Ovary (tissue), 10 donors: ENCODE measurements at regions of chr9 and their contacts with region 1.

Region 1: GRCh38 chr9:130675396-130675795 is 11.0 kb downstream of the PRDM12 start:
- DNase-seq: no peak
- H3K4me3 ChIP-seq: no peak overlapping the region
- H3K27ac ChIP-seq: no peak overlapping the region
- H3K4me1 ChIP-seq: no peaks in the 10 kb centered on the region
- H3K27me3 ChIP-seq: no peaks in the 10 kb centered on the region
- CTCF ChIP-seq: no peak
- EP300 ChIP-seq: no peak
- POLR2A ChIP-seq: no peak

Region 2: DNA sequence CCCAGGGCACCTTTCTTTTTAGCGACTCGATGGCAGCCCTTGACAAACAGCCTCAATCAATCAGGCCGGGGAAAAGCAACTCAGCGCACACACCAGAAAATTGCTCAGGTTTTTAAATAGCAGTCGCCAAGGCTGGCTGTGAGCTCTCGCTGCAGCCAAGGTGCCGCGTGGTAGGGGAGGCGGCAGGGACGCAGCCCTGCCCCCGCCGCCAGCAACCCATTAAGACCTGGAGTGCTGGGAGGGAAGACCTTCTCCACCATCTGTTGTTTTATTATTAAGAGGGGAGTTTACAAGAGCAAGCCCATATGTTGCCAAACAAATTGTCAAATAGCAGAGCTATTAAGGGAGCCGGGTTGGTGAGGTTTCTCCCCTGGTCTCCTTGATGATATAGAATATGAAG is 208.0 kb before region 1 on chr9:
- intact Hi-C with region 1: loop called in 3 of 4 experiments (anchors 5 kb)
- DNase-seq: no peak
- H3K4me3 ChIP-seq: no peak overlapping the region
- H3K27ac ChIP-seq: no peak overlapping the region
- H3K4me1 ChIP-seq: no peaks in the 10 kb centered on the region
- H3K27me3 ChIP-seq: no peaks in the 10 kb centered on the region
- CTCF ChIP-seq: no peak
- EP300 ChIP-seq: no peak
- POLR2A ChIP-seq: no peak

Region 3: DNA sequence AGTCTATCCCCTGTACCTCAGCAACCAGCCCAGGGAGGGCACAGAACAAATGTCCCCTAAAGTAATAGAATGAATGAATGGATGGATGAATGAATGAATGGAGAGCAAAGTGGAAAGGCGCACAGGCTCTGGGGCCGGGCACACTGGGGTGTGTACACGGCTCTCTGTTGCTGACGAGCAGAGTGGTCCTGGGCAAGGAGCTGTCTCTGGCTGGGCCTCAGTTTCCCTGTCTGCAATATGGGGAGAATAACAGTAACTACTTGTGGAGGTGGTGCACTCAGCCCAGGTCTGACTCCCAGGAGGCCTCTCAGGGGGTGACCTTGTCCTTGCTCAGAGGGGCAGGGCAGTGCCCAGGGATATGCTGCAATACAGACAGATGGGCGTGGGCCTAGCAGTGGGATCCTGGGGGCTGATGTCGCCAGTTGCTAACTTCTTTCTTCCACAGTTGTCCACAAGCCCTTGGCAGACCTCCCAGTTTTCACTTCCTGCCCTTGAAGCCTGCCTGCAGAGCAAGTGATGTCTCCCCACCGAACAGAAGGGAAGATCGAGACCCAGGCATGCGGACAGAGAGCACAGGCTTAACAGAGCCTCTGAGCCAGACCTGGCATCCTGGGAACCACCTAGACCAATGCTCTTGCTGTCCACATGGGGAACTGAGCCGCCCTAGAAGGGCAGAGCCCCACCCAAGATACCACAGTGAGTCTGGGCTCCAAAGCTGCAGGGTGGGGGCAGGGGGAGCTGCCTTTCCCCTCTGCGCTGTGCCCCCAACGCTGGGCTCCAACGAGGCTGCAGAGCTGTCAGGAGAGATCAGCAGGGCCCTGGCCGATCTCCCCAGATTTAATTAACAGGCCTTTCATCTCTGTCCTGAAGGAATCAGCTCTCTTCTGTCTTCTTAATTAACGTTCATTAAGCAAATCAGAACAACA is 320.0 kb after region 1 on chr9:
- intact Hi-C with region 1: no loop called
- DNase-seq: no peak
- H3K4me3 ChIP-seq: no peak overlapping the region
- H3K27ac ChIP-seq: no peak overlapping the region
- H3K4me1 ChIP-seq: no peaks in the 10 kb centered on the region
- H3K27me3 ChIP-seq: no peaks in the 10 kb centered on the region
- CTCF ChIP-seq: no peak
- EP300 ChIP-seq: no peak
- POLR2A ChIP-seq: no peak